HCT116 (cell line): ENCODE measurements at regions of chr6 and their contacts with region 1.

Region 1: DNA sequence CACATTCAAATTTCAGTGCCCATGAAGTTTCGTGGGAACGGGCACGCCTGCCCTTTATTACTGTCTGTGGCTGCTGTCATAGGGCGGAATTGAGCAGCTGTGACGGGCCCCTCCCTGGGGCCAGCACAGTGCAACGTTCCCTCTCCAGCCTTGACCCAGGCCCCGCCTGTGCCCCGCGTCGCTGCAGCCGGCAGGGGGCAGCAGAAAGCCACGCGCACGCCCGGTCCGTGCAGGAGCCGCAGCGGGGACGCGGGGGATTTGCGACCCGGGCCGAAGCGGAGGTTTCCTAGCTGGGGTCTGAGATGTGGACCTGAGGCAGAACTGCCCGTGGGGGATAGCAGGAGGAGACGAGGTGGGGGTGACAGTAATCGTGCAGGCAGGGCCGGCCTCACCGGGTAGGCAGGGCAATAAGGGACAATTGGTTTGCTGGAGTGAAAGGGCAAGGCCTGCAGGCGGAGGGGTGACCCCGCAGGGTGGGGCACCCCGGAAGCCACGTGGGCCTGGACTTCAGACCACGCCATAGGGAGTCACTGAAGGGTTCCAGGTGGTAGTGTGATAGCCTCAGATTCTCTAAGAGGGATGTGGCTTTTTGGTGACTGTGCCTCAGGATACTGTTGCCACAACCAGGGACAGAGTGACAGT is 54.4 kb downstream of the SYTL3 start:
- DNase-seq: peak; percentile 82
- ATAC-seq: peak; percentile 84
- H3K4me3 ChIP-seq: peak overlapping the region; percentile 32 to 49
- H3K27ac ChIP-seq: peak overlapping the region; percentile 92
- H3K4me1 ChIP-seq: peaks cover 52 to 77% of the 10 kb centered on the region in 2 experiments
- H3K27me3 ChIP-seq: no peaks in the 10 kb centered on the region
- CTCF ChIP-seq: peak in 2 of 3 experiments; percentile 100; a peak in 4 of 6 replicates
- POLR2A ChIP-seq: no peak
- RAD21 ChIP-seq: no peak

Region 2: GRCh38 chr6:158559895-158560835 is 144.1 kb before region 1 on chr6 and contains the start of gene TMEM181:
- CTCF ChIA-PET with region 1: no interaction called
- POLR2A ChIA-PET with region 1: no interaction called
- RAD21 ChIA-PET with region 1: no interaction called
- intact Hi-C with region 1: no loop called
- DNase-seq: peak; percentile 36
- ATAC-seq: peak; percentile 83
- H3K4me3 ChIP-seq: peak within 1 kb of the TSS; percentile 75 to 82
- H3K27ac ChIP-seq: peak within 1 kb of the TSS; percentile 79
- H3K4me1 ChIP-seq: peaks cover 6 to 23% of the 10 kb centered on the region in 2 experiments; a peak in 3 of 4 replicates
- H3K27me3 ChIP-seq: no peaks in the 10 kb centered on the region
- CTCF ChIP-seq: no peak
- POLR2A ChIP-seq: peak; percentile 78
- RAD21 ChIP-seq: no peak
- total RNA-seq, gene TMEM181: 34.4 TPM

Region 3: DNA sequence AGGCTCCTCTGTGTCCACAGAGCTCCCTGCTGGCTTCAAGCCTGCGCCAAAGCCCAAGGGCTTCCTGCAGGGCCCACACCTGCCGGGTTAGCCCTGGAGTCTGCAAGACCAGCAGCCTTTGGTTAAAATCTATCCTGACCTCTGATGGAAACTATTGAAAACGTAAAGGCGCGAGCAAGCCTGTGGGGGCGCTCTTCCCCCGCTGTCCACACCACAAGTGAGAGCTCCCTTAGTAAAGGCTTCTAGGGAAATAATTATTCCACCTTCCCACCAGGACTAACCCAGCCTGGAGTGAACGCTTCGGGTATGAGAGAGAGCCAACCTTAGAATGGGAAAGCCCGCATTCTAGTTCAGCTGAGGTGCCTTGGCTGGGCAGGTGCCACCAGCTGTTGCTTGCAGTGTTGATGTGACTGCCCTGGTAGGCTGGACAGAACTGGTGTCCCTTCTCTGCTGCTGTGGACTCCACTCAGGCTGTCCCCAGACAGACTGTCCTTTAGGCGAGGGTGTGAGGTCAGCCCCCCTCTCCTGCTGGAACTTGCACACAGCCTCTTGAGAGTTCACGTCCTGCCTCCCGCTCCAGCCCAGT is 14.3 kb after region 1 on chr6:
- CTCF ChIA-PET with region 1: interaction called, 51 read pairs
- POLR2A ChIA-PET with region 1: interaction called, 20 read pairs
- RAD21 ChIA-PET with region 1: interaction called in 1 of 2 experiments, 4 read pairs
- intact Hi-C with region 1: loop called (anchors 2 kb)
- DNase-seq: peak; percentile 77
- ATAC-seq: peak; percentile 55
- H3K4me3 ChIP-seq: no peak overlapping the region
- H3K27ac ChIP-seq: peak overlapping the region; percentile 97
- H3K4me1 ChIP-seq: peaks cover 73 to 92% of the 10 kb centered on the region in 2 experiments
- H3K27me3 ChIP-seq: no peaks in the 10 kb centered on the region
- CTCF ChIP-seq: peak in 2 of 3 experiments; percentile 99 to 100; a peak in 4 of 6 replicates
- POLR2A ChIP-seq: no peak
- RAD21 ChIP-seq: no peak

Region 4: DNA sequence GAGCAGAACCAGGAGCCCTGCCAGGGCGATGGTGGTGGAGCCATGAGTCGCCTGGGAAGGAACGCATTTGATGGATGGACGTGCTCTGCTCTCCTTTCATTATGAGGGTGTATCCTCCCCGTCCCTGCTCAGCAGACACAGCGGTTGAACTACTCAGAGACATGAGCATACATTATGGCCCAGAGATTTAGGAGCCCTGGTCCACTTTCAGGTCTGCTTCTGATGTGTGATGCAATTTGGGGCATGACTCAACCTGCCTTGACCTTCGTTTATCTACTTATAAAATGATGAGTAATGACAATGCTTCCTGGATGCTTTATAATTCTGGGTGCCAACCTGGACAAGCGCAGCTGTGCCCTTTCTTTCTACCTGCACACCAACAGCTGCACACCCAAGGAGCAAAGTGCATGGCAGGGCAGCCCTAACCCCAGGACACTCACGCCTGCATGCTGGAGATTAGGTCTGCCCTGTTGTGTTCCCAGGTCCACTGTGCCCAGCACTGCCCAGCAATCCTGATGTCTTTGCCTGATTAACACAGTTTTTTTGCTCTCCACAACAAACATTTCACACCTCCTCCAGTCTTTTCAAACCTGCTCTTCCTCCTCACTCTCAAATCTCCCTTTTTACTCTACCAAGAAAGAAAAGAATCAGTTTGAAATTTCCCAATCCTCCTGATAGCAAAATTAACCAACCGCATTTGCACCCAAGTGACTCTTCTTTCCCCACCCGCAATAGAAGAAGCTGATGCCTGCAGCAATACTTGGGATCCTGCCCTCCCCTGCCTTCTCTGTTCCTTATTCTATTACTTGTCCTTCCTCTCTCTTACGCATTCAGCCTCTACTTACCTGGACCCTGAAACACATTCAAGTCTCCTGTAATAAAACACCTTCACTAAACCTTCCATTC is 33.7 kb after region 1 on chr6:
- CTCF ChIA-PET with region 1: interaction called, 8 read pairs
- POLR2A ChIA-PET with region 1: interaction called, 15 read pairs
- RAD21 ChIA-PET with region 1: no interaction called
- intact Hi-C with region 1: no loop called
- DNase-seq: peak; percentile 92
- ATAC-seq: peak; percentile 77
- H3K4me3 ChIP-seq: no peak overlapping the region
- H3K27ac ChIP-seq: peak overlapping the region; percentile 97
- H3K4me1 ChIP-seq: peaks cover 58 to 88% of the 10 kb centered on the region in 2 experiments
- H3K27me3 ChIP-seq: no peaks in the 10 kb centered on the region
- CTCF ChIP-seq: no peak
- POLR2A ChIP-seq: no peak
- RAD21 ChIP-seq: no peak

Region 5: DNA sequence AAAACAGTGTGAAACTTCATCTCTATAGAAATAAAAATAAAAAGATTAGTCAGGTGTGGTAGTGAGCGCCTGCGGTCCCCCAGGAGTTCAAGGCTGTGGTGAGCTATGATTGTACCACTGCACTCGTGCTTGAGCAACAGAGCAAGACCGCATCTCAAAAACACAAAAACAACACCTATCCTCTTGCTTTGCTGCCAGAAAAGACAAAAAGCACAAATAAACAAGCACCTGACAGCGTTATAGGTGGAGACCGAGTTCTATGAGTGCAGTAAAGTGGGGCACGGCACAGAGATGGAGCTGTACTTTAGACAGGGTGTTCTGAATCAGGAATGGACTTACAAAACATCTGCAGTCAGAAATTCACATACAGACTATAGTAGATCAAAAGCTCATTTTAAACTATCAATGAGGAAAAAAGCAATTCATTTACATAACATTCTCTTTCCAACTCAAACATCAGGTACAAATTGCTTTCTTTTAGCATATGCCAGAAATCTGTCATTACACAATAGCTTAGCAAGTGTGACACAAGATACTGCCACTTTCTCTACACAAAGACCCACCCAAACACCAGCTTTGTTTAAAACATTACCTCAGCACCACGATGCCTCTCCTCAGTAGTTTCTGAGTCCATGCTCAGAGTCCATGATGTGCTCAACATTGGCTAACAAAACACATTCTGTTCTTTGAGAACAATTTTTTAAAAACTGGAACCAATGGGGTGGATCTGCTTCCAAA is 104.8 kb after region 1 on chr6:
- CTCF ChIA-PET with region 1: interaction called, 7 read pairs
- POLR2A ChIA-PET with region 1: interaction called, 6 read pairs
- RAD21 ChIA-PET with region 1: no interaction called
- intact Hi-C with region 1: loop called (anchors 2 kb)
- DNase-seq: no peak
- ATAC-seq: no peak
- H3K4me3 ChIP-seq: peak overlapping the region in 1 of 2 experiments; percentile 1; a peak in 1 of 4 replicates
- H3K27ac ChIP-seq: peak overlapping the region; percentile 92
- H3K4me1 ChIP-seq: peaks cover 95 to 98% of the 10 kb centered on the region in 2 experiments
- H3K27me3 ChIP-seq: no peaks in the 10 kb centered on the region
- CTCF ChIP-seq: no peak
- POLR2A ChIP-seq: no peak
- RAD21 ChIP-seq: no peak

Region 6: DNA sequence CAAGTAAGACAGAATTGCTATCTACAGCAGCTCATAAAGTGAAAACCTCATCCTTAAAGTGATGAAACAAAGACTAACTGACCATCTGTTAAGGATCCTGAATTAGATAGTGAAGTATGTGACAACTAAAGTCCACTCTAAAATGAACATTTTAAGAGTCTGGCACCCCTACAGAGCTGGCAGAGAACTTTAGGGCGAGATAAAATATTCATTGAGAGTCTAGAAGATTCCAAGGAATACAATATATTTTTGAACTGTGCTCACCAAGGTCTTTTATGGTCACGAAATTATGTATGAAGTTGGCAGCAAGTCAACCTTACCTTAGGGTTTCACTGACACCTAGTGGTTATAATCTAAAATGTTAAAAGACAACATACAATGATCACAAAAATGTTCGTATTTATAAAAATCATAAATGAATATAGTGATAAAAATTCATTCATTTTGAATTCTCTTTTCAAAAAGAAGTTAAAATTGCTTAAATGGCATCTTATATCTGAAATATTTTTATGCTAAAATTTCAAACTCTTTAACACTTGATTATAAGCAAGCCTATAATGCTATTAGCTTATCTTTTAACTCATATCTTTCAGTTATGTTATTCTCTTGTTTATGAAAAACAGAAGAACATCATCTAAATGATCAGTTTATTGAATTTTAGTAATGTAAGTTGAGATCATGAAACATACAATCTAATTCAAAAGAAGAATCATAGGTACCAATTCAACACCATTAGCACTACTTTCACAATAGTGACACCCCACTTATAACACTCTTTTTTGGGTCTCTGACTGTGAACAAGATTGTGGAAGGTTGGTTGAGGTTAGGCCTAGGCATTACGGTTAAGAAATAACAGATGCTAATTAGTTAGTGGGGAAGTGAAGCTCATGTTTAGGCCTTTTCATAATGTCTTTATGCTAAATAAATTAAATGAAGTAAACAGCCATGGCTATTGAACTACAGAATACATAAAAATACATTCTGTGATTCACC is 268.2 kb after region 1 on chr6:
- CTCF ChIA-PET with region 1: interaction called, 3 read pairs
- POLR2A ChIA-PET with region 1: no interaction called
- RAD21 ChIA-PET with region 1: interaction called in 1 of 2 experiments, 3 read pairs
- intact Hi-C with region 1: loop called (anchors 1 kb)
- DNase-seq: peak; percentile 55
- ATAC-seq: peak; percentile 72
- H3K4me3 ChIP-seq: no peak overlapping the region
- H3K27ac ChIP-seq: peak overlapping the region; percentile 6; the same call in 1 of the 2 replicates
- H3K4me1 ChIP-seq: peaks cover 0 to 20% of the 10 kb centered on the region in 2 experiments; a peak in 2 of 4 replicates
- H3K27me3 ChIP-seq: no peaks in the 10 kb centered on the region
- CTCF ChIP-seq: peak; percentile 31 to 70 (median 59); a peak in 5 of 6 replicates
- POLR2A ChIP-seq: no peak
- RAD21 ChIP-seq: peak; percentile 93

Region 7: GRCh38 chr6:159104163-159104925 is 400.0 kb after region 1 on chr6:
- CTCF ChIA-PET with region 1: interaction called, 5 read pairs
- POLR2A ChIA-PET with region 1: no interaction called
- RAD21 ChIA-PET with region 1: no interaction called
- intact Hi-C with region 1: loop called (anchors 2 kb)
- DNase-seq: no peak
- ATAC-seq: peak; percentile 95
- H3K4me3 ChIP-seq: no peak overlapping the region
- H3K27ac ChIP-seq: no peak overlapping the region
- H3K4me1 ChIP-seq: peaks cover 0 to 26% of the 10 kb centered on the region in 2 experiments; a peak in 2 of 4 replicates
- H3K27me3 ChIP-seq: no peaks in the 10 kb centered on the region
- CTCF ChIP-seq: peak; percentile 82 to 98 (median 94)
- POLR2A ChIP-seq: no peak
- RAD21 ChIP-seq: peak; percentile 94